AG04449 (cell line): ENCODE measurements at regions of chr1 and their contacts with region 1.

Region 1: GRCh38 chr1:39973503-39974135 is 18.7 kb downstream of the MFSD2A start:
- DNase-seq: no peak
- H3K4me3 ChIP-seq: no peak overlapping the region
- CTCF ChIP-seq: peak; percentile 92

Region 2: DNA sequence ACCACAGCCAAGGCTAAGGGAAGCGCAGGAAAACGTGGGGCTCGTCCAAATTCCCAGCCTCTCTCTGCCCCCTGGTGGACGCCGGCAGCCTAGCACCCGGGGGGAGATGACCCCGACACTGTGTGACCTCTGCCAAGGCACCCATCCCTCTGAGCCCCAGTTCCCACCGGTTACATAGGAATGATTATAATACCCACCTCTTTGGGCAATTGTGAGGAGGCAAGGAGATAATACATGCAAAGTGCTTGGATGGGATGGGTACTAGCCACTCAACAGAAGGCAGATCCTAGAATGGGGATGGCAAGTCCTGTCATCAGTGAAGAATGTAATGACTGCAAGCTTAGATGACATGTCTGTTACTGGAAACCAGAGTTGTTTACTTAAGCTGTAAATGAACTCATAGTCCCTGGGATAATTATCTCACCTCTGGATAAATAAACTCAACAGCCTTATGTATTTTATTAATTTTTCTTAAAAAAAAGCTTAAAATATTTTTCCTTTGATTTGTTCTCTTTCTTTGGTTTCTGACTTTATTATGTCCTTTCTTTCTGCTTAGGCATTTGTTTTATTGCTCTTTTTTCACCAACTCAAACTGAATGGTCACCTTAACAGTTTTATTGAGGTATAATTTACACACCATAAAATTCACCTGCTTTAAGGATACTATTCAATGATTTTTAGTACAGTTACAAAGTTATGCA is 173.7 kb before region 1 on chr1:
- CTCF ChIA-PET with region 1: interaction called, 10 read pairs
- POLR2A ChIA-PET with region 1: no interaction called
- DNase-seq: peak; percentile 75
- H3K4me3 ChIP-seq: 0 out of 2 replicates have a peak overlapping the region, but pooled peaks have one; percentile 12
- CTCF ChIP-seq: peak; percentile 85

Region 3: GRCh38 chr1:39850606-39851216 is 122.9 kb before region 1 on chr1:
- CTCF ChIA-PET with region 1: interaction called, 22 read pairs
- POLR2A ChIA-PET with region 1: no interaction called
- DNase-seq: no peak
- H3K4me3 ChIP-seq: no peak overlapping the region
- CTCF ChIP-seq: no peak

Region 4: DNA sequence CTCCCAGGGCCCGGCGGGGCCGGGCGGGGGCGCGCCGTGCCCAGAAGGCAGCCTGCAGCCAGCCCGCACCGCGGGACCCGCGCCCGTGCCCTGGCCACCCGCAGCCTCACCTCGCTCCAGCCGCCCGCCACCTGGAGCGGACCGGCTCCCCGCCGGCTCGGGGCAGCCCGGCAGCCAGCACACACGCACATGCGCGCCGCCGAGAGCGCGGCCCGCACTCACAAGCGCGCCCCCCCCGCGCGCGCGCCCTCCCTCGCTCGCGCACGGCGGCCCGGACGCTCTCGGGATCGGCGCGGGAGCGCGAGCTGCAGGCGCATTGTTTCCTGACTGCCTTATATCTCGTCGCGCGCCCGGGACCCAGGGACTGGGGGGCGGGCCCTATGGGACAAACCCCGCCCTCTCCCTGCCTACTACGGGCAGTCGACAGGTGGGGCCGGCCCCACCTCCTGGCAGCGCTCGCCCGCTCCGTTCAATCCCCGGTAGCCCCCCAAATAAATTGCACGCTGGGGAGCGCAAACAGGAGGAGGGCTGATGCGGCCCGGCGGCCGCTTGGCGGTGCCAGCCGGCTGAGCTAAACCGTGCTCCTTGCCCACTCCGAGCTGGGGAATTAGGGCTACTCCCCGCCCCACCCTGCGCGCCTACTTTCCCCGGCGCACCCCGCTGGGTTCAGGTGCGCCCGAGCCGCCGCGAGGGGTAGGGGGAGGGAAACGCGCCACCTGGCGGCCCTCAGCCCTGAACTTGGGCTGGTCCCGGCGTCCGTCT is 71.7 kb before region 1 on chr1 and contains the start of gene MYCL:
- CTCF ChIA-PET with region 1: interaction called, 53 read pairs
- POLR2A ChIA-PET with region 1: no interaction called
- DNase-seq: no peak
- H3K4me3 ChIP-seq: peak within 1 kb of the TSS; percentile 63
- CTCF ChIP-seq: peak; percentile 70

Region 5: DNA sequence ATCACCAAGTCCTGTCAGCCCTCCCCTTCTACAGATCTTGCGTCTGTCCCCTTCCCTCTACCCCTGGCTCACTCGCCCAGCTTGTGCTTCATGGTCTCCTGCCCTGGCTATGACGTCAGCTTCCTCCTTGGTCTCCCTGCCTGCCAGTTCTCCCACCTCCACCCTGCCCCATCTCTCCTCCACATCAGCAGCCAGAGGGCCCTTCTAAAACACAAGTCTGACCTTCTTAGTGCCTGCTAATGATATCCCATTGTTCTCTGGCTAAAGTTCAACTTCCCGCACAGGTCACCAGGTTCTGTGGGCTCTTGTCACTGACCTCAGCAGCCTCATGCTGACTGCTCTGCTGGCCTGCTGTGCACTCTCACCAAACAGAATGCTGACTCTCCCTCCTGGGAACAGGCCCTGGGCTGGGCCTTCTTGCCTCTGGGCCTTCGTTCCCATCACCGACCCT is 47.3 kb before region 1 on chr1:
- CTCF ChIA-PET with region 1: interaction called, 183 read pairs
- POLR2A ChIA-PET with region 1: no interaction called
- DNase-seq: no peak
- H3K4me3 ChIP-seq: no peak overlapping the region
- CTCF ChIP-seq: no peak

Region 6: GRCh38 chr1:39988618-39989351 is 15.2 kb after region 1 on chr1:
- CTCF ChIA-PET with region 1: interaction called, 25 read pairs
- POLR2A ChIA-PET with region 1: no interaction called
- DNase-seq: no peak
- H3K4me3 ChIP-seq: no peak overlapping the region
- CTCF ChIP-seq: no peak